Activated naive CD4-positive, alpha-beta T cell treated with anti-CD3 and anti-CD28 coated beads for 36 hours (primary cell): ENCODE measurements at regions of chr15 and their contacts with region 1.

Region 1: GRCh38 chr15:42137431-42138261 is 18.8 kb downstream of the PLA2G4F start:
- DNase-seq: peak; percentile 53
- H3K4me3 Mint-ChIP-seq: no peak overlapping the region
- H3K27ac Mint-ChIP-seq: no peak overlapping the region
- H3K4me1 Mint-ChIP-seq: no peaks in the 10 kb centered on the region
- H3K27me3 Mint-ChIP-seq: no peaks in the 10 kb centered on the region

Region 2: GRCh38 chr15:42065033-42065432 is 72.6 kb before region 1 on chr15:
- CTCF ChIA-PET with region 1: interaction called, 5 read pairs
- intact Hi-C with region 1: loop called (anchors 1 kb)
- DNase-seq: no peak
- H3K4me3 Mint-ChIP-seq: no peak overlapping the region
- H3K27ac Mint-ChIP-seq: no peak overlapping the region
- H3K4me1 Mint-ChIP-seq: no peaks in the 10 kb centered on the region
- H3K27me3 Mint-ChIP-seq: peaks cover 9% of the 10 kb centered on the region

Region 3: GRCh38 chr15:42084460-42085235 is 53.0 kb before region 1 on chr15:
- CTCF ChIA-PET with region 1: interaction called, 24 read pairs
- intact Hi-C with region 1: loop called (anchors 2 kb)
- DNase-seq: peak; percentile 57
- H3K4me3 Mint-ChIP-seq: no peak overlapping the region
- H3K27ac Mint-ChIP-seq: no peak overlapping the region
- H3K4me1 Mint-ChIP-seq: peaks cover 4% of the 10 kb centered on the region
- H3K27me3 Mint-ChIP-seq: peaks cover 6% of the 10 kb centered on the region

Region 4: GRCh38 chr15:42385206-42385979 is 247.7 kb after region 1 on chr15:
- CTCF ChIA-PET with region 1: no interaction called
- intact Hi-C with region 1: loop called (anchors 10 kb)
- DNase-seq: peak; percentile 64
- H3K4me3 Mint-ChIP-seq: no peak overlapping the region
- H3K27ac Mint-ChIP-seq: no peak overlapping the region
- H3K4me1 Mint-ChIP-seq: no peaks in the 10 kb centered on the region
- H3K27me3 Mint-ChIP-seq: no peaks in the 10 kb centered on the region

Region 5: GRCh38 chr15:42474827-42475226 is 337.2 kb after region 1 on chr15:
- CTCF ChIA-PET with region 1: interaction called, 3 read pairs
- intact Hi-C with region 1: loop called (anchors 5 kb)
- DNase-seq: no peak
- H3K4me3 Mint-ChIP-seq: no peak overlapping the region
- H3K27ac Mint-ChIP-seq: no peak overlapping the region
- H3K4me1 Mint-ChIP-seq: peaks cover 7% of the 10 kb centered on the region
- H3K27me3 Mint-ChIP-seq: no peaks in the 10 kb centered on the region

Region 6: GRCh38 chr15:42650208-42651066 is 512.8 kb after region 1 on chr15:
- CTCF ChIA-PET with region 1: interaction called, 3 read pairs
- intact Hi-C with region 1: loop called (anchors 5 kb)
- DNase-seq: peak; percentile 84
- H3K4me3 Mint-ChIP-seq: no peak overlapping the region
- H3K27ac Mint-ChIP-seq: no peak overlapping the region
- H3K4me1 Mint-ChIP-seq: no peaks in the 10 kb centered on the region
- H3K27me3 Mint-ChIP-seq: no peaks in the 10 kb centered on the region